CD8-positive, alpha-beta memory T cell (primary cell): ENCODE measurements at regions of chr1 and their contacts with region 1.

Region 1: DNA sequence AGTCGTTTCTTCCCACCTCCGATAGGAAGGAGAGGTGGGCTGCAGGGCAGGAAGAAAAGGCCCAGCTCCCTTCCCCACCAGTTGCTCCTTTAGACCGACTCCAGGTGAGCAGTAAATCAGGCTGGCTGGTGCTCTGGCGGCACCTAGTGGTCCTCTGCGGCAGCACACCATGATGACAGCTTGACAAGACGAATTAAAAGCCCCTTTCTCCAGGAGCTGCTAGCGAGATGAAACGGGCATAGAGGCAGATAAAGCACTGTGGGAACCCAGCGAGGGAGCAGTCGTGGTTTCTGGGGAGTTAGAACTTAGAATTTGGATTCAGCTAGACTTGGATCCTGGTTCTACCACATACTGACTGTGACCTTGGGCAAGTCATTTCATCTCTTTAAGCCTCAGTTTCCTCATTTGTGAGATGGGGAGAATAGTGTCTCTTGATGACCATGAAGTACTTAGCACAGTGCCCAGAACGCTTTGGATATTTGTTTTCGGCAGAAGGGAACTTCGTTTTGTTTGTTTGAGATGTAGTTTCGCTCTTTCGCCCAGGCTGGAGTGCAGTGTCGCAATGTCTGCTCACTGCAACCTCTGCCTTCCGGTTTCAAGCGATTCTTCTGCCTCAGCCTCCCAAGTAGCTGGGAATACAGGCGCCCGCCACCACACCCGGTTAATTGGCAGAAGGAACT is 21.8 kb upstream of the COL9A2 start:
- DNase-seq: peak; percentile 80 to 91 (median 81)
- H3K4me3 ChIP-seq: peak overlapping the region; percentile 45
- H3K4me3 Mint-ChIP-seq: peak overlapping the region in 5 of 7 donors; percentile 24 to 59 (median 48)
- H3K27ac ChIP-seq: no peak overlapping the region
- H3K27ac Mint-ChIP-seq: peak overlapping the region in 7 of 8 donors; percentile 3 to 67 (median 26)
- H3K4me1 ChIP-seq: peaks cover 26% of the 10 kb centered on the region
- H3K4me1 Mint-ChIP-seq: peaks cover 25 to 31% (median 29%) of the 10 kb centered on the region in 3 donors
- H3K27me3 ChIP-seq: no peaks in the 10 kb centered on the region
- H3K27me3 Mint-ChIP-seq: peaks cover 0 to 2% of the 10 kb centered on the region in 2 donors

Region 2: GRCh38 chr1:40078512-40079333 is 260.2 kb before region 1 on chr1:
- CTCF ChIA-PET with region 1: interaction called, 18 read pairs
- POLR2A ChIA-PET with region 1: no interaction called
- DNase-seq: peak in 4 of 5 donors; percentile 10 to 49 (median 33)
- H3K4me3 ChIP-seq: no peak overlapping the region
- H3K4me3 Mint-ChIP-seq: no peak overlapping the region
- H3K27ac ChIP-seq: no peak overlapping the region
- H3K27ac Mint-ChIP-seq: peak overlapping the region in 6 of 8 donors; percentile 12 to 84 (median 80)
- H3K4me1 ChIP-seq: no peaks in the 10 kb centered on the region
- H3K4me1 Mint-ChIP-seq: peaks cover 6 to 9% (median 7%) of the 10 kb centered on the region in 3 donors
- H3K27me3 ChIP-seq: no peaks in the 10 kb centered on the region
- H3K27me3 Mint-ChIP-seq: no peaks in the 10 kb centered on the region

Region 3: GRCh38 chr1:40153073-40153770 is 185.7 kb before region 1 on chr1:
- CTCF ChIA-PET with region 1: interaction called, 122 read pairs
- POLR2A ChIA-PET with region 1: interaction called, 5 read pairs
- DNase-seq: peak in 2 of 5 donors; percentile 43 to 55
- H3K4me3 ChIP-seq: no peak overlapping the region
- H3K4me3 Mint-ChIP-seq: peak overlapping the region in 1 of 7 donors; percentile 50
- H3K27ac ChIP-seq: no peak overlapping the region
- H3K27ac Mint-ChIP-seq: peak overlapping the region in 7 of 8 donors; percentile 7 to 78 (median 62)
- H3K4me1 ChIP-seq: no peaks in the 10 kb centered on the region
- H3K4me1 Mint-ChIP-seq: peaks cover 5 to 10% (median 6%) of the 10 kb centered on the region in 3 donors
- H3K27me3 ChIP-seq: no peaks in the 10 kb centered on the region
- H3K27me3 Mint-ChIP-seq: peaks cover 3 to 5% of the 10 kb centered on the region in 2 donors

Region 4: DNA sequence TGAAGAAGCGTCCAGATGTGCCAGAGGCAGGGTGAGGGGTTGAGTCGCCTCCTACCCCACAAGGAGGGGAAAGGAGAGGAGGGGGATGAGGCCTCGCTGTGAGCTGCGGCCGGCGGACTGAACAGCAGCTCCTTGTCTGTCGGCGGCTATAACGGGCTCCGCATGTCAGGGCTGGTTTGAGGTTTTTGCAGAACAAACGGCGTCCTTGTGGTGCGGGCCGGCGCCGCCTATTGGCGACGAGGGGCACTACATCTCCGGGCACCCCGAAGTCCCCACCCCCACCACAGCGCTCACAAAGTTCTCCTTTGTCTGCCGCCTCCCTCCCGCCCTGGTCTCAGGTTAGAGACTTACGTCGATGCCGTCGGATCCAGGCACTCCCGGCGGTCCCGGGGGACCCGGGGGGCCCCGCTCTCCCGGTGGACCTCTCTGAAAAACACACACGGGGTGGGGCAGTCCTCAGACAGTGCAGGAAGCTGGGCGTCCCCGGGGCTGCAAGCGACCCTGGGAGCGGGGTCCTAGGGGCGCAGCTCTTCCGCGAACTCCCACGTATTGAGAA is 23.6 kb before region 1 on chr1:
- CTCF ChIA-PET with region 1: interaction called, 31 read pairs
- POLR2A ChIA-PET with region 1: no interaction called
- DNase-seq: peak; percentile 72 to 88 (median 81)
- H3K4me3 ChIP-seq: peak overlapping the region; percentile 80
- H3K4me3 Mint-ChIP-seq: peak overlapping the region; percentile 84 to 93 (median 90)
- H3K27ac ChIP-seq: no peak overlapping the region
- H3K27ac Mint-ChIP-seq: peak overlapping the region in 5 of 8 donors; percentile 15 to 89 (median 84)
- H3K4me1 ChIP-seq: peaks cover 19% of the 10 kb centered on the region
- H3K4me1 Mint-ChIP-seq: peaks cover 13 to 41% (median 23%) of the 10 kb centered on the region in 3 donors
- H3K27me3 ChIP-seq: peaks cover 5% of the 10 kb centered on the region
- H3K27me3 Mint-ChIP-seq: peaks cover 8 to 18% of the 10 kb centered on the region in 2 donors

Region 5: GRCh38 chr1:40373338-40374283 is 34.7 kb after region 1 on chr1 and contains the start of gene SMAP2:
- CTCF ChIA-PET with region 1: interaction called, 20 read pairs
- POLR2A ChIA-PET with region 1: no interaction called
- DNase-seq: peak; percentile 93 to 97 (median 96)
- H3K4me3 ChIP-seq: peak within 1 kb of the TSS; percentile 91
- H3K4me3 Mint-ChIP-seq: peak within 1 kb of the TSS; percentile 96 to 100 (median 99)
- H3K27ac ChIP-seq: peak within 1 kb of the TSS; percentile 97
- H3K27ac Mint-ChIP-seq: peak within 1 kb of the TSS; percentile 95 to 100 (median 98)
- H3K4me1 ChIP-seq: peaks cover 43% of the 10 kb centered on the region
- H3K4me1 Mint-ChIP-seq: peaks cover 47 to 60% (median 56%) of the 10 kb centered on the region in 3 donors
- H3K27me3 ChIP-seq: no peaks in the 10 kb centered on the region
- H3K27me3 Mint-ChIP-seq: peaks cover 0 to 9% of the 10 kb centered on the region in 2 donors
- total RNA-seq, gene SMAP2: 144 to 146 TPM

Region 6: DNA sequence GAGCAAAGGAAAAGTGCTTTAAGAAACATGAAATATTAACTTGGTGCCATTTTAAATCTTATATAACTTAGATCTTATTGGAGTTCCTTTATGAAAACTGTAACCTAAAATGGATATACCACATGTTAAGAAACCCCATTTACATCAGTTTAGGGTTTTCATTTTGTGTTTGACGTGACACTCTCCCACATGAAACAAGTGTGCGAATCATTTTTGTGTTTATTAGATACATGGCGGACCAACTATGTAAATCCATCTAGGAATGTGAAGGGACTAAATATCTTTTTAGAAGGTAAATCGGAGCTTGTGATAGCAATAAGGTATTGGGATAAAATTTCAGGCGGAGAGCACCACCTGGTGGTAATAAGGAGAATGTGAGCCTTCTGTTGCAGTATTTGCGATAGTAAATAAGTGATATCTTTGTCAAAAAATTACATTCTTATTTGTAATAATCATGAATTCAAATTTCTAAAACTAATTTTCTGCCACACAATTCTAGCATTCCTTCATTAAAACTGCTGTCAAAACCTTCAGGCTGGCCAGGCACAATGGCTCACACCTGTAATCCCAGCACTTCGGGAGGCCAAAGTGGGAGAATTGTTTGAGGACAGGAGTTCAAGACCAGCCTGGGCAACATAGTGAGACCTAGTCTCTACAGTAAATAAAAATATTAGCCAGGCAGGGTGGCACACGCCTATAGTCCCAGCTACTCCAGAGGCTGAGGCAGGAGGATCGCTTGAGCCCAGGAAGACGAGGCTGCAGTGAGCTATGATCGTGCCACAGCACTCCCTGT is 66.0 kb after region 1 on chr1:
- CTCF ChIA-PET with region 1: interaction called, 44 read pairs
- POLR2A ChIA-PET with region 1: no interaction called
- DNase-seq: peak in 2 of 5 donors; percentile 68 to 83
- H3K4me3 ChIP-seq: no peak overlapping the region
- H3K4me3 Mint-ChIP-seq: peak overlapping the region; percentile 0 to 73 (median 64)
- H3K27ac ChIP-seq: no peak overlapping the region
- H3K27ac Mint-ChIP-seq: peak overlapping the region; percentile 50 to 99 (median 96)
- H3K4me1 ChIP-seq: peaks cover 56% of the 10 kb centered on the region
- H3K4me1 Mint-ChIP-seq: peaks cover 53 to 84% (median 83%) of the 10 kb centered on the region in 3 donors
- H3K27me3 ChIP-seq: no peaks in the 10 kb centered on the region
- H3K27me3 Mint-ChIP-seq: peaks cover 0 to 3% of the 10 kb centered on the region in 2 donors

Region 7: DNA sequence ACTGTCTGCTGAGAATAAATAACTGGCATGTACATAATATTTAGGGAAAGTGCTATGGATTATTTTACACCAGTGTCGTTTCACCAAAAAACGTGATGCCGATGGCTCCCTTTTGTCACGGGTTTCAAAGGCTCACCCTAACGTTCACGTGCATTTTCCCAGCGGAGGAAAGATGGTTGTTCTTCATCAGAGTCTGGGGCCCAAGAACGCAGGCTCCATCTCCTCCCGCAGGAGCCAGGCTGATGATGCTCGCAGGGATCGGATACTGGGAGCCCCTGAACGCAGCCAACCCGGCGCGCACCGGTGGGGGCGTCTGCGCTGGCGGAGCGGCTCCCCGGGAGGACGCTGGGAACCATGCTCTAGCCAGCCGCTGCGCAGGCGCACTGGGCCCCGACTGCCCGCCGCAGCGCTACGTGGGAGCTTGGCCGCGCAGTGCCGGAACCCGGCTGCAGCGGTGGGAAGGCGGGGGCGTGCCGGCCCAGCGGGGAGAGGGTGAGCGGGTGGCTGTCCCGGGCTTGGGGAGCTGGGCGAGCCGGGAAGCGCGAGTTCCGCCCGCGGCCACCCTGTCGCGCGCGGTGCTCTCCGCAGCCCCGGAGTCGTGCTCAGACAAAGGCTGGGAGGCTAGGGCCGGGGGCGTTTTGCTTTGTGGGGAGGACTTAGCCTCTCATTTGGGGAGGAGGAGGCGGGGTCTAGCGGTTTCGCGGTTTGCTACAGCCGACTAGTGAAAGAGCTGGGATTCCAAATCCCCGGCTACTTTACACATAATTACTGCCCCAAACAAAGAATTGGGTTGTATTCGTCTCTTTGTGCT is 111.0 kb after region 1 on chr1 and contains the start of gene ZFP69B:
- CTCF ChIA-PET with region 1: no interaction called
- POLR2A ChIA-PET with region 1: no interaction called
- DNase-seq: peak; percentile 82 to 87 (median 85)
- H3K4me3 ChIP-seq: peak within 1 kb of the TSS; percentile 80
- H3K4me3 Mint-ChIP-seq: peak within 1 kb of the TSS; percentile 83 to 95 (median 89)
- H3K27ac ChIP-seq: peak within 1 kb of the TSS; percentile 68
- H3K27ac Mint-ChIP-seq: peak within 1 kb of the TSS; percentile 85 to 97 (median 94)
- H3K4me1 ChIP-seq: peaks cover 20% of the 10 kb centered on the region
- H3K4me1 Mint-ChIP-seq: peaks cover 22 to 29% (median 29%) of the 10 kb centered on the region in 3 donors
- H3K27me3 ChIP-seq: no peaks in the 10 kb centered on the region
- H3K27me3 Mint-ChIP-seq: no peaks in the 10 kb centered on the region
- total RNA-seq, gene ZFP69B: 5.6 to 5.9 TPM